ENCODE measurements at regions of chr5 and their contacts with region 1.

Region 1: GRCh38 chr5:140174465-140175366 is at the start of gene CYSTM1:
- DNase-seq: peak; percentile 95 to 98 (median 97)
- ATAC-seq: peak; percentile 94
- H3K4me3 ChIP-seq: peak within 1 kb of the TSS; percentile 97
- H3K4me3 Mint-ChIP-seq: peak within 1 kb of the TSS; percentile 84 to 95 (median 91)
- H3K27ac ChIP-seq: peak within 1 kb of the TSS; percentile 89
- H3K27ac Mint-ChIP-seq: peak within 1 kb of the TSS; percentile 78 to 98 (median 95)
- H3K4me1 ChIP-seq: peaks cover 8 to 14% of the 10 kb centered on the region in 2 donors
- H3K4me1 Mint-ChIP-seq: peaks cover 7 to 20% (median 14%) of the 10 kb centered on the region in 7 donors
- H3K27me3 ChIP-seq: no peaks in the 10 kb centered on the region
- H3K27me3 Mint-ChIP-seq: peaks cover 0 to 30% (median 0%) of the 10 kb centered on the region in 5 donors
- total RNA-seq, gene CYSTM1: 1.6 to 11.1 (median 3.5) TPM

Region 2: DNA sequence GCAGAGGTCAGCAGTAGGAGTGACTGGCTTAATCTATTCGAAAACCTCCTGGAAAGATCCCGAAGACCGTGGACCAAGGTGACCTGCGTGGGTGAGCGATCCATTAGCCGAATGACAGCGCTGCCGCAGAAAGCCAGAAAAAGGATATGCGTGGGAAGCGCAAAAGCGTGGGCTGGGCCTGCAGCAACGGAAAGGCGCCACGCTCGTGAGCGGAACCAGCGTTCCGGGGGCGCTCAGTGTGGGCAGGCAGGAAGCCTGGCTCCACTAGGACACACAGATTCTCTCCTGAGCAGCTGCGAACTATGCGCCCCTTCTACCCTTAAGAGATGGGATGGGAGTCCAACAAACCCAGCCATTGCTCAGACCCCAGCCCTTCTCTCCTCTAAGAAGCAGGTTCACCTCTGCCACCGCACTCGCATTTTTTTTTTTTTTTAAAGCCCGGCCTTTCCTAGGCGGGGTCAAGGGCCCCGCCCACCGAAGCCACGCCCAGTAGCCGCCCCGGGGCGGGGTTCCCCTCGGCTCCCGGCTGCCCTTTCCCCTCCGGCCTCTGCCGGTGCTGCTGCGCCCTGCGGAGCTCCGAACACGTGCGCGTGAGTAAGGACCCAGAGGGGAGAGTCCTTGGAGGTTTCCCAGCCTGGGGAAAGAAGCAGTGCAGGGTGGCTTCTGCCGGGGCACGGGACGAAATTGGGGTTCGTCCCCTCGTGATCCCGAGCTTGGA is 901.0 kb before region 1 on chr5:
- CTCF ChIA-PET with region 1: no interaction called
- POLR2A ChIA-PET with region 1: no interaction called
- intact Hi-C with region 1: loop called in 1 of 2 experiments (anchors 10 kb)
- DNase-seq: peak; percentile 71 to 95 (median 83)
- ATAC-seq: peak; percentile 99
- H3K4me3 ChIP-seq: peak overlapping the region; percentile 71
- H3K4me3 Mint-ChIP-seq: peak overlapping the region; percentile 77 to 92 (median 90)
- H3K27ac ChIP-seq: peak overlapping the region; percentile 69
- H3K27ac Mint-ChIP-seq: peak overlapping the region; percentile 54 to 92 (median 85)
- H3K4me1 ChIP-seq: peaks cover 26 to 27% of the 10 kb centered on the region in 2 donors
- H3K4me1 Mint-ChIP-seq: peaks cover 30 to 54% (median 47%) of the 10 kb centered on the region in 7 donors
- H3K27me3 ChIP-seq: no peaks in the 10 kb centered on the region
- H3K27me3 Mint-ChIP-seq: peaks cover 0 to 3% (median 0%) of the 10 kb centered on the region in 5 donors

Region 3: GRCh38 chr5:140113699-140114263 is 60.9 kb before region 1 on chr5 and contains the start of gene PURA:
- CTCF ChIA-PET with region 1: no interaction called
- POLR2A ChIA-PET with region 1: interaction called, 6 read pairs
- intact Hi-C with region 1: loop called (anchors 1 kb)
- DNase-seq: peak; percentile 94 to 98 (median 97)
- ATAC-seq: peak; percentile 93
- H3K4me3 ChIP-seq: peak within 1 kb of the TSS; percentile 77
- H3K4me3 Mint-ChIP-seq: peak within 1 kb of the TSS; percentile 86 to 97 (median 94)
- H3K27ac ChIP-seq: peak within 1 kb of the TSS; percentile 89
- H3K27ac Mint-ChIP-seq: peak within 1 kb of the TSS; percentile 88 to 99 (median 95)
- H3K4me1 ChIP-seq: peaks cover 46 to 57% of the 10 kb centered on the region in 2 donors
- H3K4me1 Mint-ChIP-seq: peaks cover 53 to 95% (median 77%) of the 10 kb centered on the region in 7 donors
- H3K27me3 ChIP-seq: peaks cover 0 to 7% of the 10 kb centered on the region in 2 donors
- H3K27me3 Mint-ChIP-seq: peaks cover 0 to 46% (median 4%) of the 10 kb centered on the region in 5 donors
- total RNA-seq, gene PURA: 11.6 to 33.5 (median 13.9) TPM

Region 4: DNA sequence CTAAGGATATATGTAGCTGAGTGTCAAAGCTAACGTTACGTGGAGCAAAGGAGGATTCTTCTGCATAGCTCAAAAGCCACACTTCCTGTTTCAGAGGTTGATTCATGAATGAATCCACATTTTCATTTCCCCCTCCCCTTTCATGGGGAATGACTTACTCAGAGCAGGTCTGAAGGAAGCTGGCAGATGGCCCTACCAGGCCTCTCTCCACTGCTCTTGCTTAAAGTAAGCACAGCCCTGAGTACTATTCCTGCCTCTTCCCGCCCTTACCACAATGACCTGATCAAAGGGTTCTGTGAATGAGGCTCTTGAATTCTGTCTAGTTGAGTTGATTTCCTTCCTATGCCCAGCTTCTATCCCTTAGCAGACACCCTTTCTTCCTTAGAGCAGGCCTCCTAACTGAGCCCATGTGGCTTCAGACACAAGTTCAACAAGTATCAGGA is 42.7 kb before region 1 on chr5:
- CTCF ChIA-PET with region 1: no interaction called
- POLR2A ChIA-PET with region 1: no interaction called
- intact Hi-C with region 1: no loop called
- DNase-seq: peak in 2 of 9 donors; percentile 18 to 36
- ATAC-seq: peak; percentile 85
- H3K4me3 ChIP-seq: no peak overlapping the region
- H3K4me3 Mint-ChIP-seq: peak overlapping the region in 6 of 10 donors; percentile 18 to 59 (median 45)
- H3K27ac ChIP-seq: no peak overlapping the region
- H3K27ac Mint-ChIP-seq: peak overlapping the region in 5 of 9 donors; percentile 0 to 62 (median 40)
- H3K4me1 ChIP-seq: peaks cover 8 to 14% of the 10 kb centered on the region in 2 donors
- H3K4me1 Mint-ChIP-seq: peaks cover 30 to 69% (median 53%) of the 10 kb centered on the region in 7 donors
- H3K27me3 ChIP-seq: no peaks in the 10 kb centered on the region
- H3K27me3 Mint-ChIP-seq: peaks cover 0 to 5% (median 0%) of the 10 kb centered on the region in 5 donors

Region 5: DNA sequence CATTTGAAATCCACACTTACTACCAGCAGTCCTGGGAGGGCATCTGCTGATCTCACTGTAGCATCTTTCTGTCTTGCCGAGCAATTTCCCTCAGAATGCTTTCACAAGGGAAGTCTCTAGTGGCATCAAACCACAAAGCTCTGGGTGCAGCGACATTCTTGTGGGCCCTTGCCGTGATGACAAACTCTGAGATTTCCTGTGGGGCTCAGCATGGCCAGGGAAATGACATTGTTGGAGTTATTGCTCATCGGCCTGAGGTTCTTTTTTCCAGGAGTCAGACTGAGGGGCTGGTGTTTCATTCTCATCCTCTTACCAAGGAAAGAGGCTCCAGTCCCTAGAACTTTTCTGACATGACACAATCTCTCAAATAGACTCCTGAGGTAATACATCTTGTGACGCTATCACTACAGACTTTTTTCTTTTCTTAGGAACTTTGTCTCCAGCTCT is 76.8 kb after region 1 on chr5:
- CTCF ChIA-PET with region 1: no interaction called
- POLR2A ChIA-PET with region 1: no interaction called
- intact Hi-C with region 1: no loop called
- DNase-seq: peak in 8 of 9 donors; percentile 24 to 70 (median 38)
- ATAC-seq: peak; percentile 89
- H3K4me3 ChIP-seq: no peak overlapping the region
- H3K4me3 Mint-ChIP-seq: peak overlapping the region in 8 of 10 donors; percentile 9 to 64 (median 36)
- H3K27ac ChIP-seq: peak overlapping the region; percentile 47
- H3K27ac Mint-ChIP-seq: peak overlapping the region; percentile 57 to 95 (median 78)
- H3K4me1 ChIP-seq: peaks cover 8 to 20% of the 10 kb centered on the region in 2 donors
- H3K4me1 Mint-ChIP-seq: peaks cover 27 to 54% (median 36%) of the 10 kb centered on the region in 7 donors
- H3K27me3 ChIP-seq: no peaks in the 10 kb centered on the region
- H3K27me3 Mint-ChIP-seq: no peaks in the 10 kb centered on the region

Region 6: DNA sequence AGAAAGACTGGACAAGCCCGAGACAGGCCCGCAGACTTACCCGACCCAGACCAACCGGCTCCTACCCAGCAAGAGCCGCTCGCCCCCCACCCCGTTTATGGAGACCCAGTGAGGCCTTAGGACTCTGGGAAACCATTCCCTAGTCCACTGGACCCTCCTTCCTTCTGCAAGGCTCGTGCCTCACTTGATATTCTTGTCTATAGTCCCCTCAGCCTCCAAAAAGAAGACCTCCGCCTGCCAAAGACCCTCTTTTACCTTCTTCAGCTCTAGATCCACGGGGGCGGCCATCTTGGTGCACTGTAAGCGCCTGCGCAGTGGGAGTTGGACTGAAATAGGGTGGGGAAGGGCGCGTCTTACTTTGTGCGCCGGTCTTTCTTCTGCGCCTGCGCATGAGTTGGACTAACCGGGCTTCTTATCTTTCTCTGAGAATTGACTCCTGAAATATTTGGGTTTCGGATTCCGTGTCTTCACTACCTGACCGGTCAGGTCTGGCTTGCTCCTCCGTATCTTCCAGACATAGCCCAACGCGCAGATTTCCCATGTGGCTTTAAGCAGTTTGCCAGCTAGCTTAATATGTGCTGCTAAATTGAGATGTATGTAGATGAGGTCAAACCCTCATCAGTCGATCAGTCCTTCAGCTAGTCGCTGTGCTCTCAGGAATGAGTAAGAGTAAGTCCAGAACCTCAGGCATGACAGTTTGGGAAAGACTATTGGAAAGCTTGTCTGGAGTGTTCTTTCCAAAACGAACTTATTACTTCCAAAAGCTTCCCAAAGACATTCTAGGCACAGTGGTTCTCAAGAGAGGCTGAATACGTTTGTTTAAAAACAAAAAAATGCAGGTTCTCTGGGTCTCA is 128.3 kb after region 1 on chr5 and contains the start of gene PFDN1:
- CTCF ChIA-PET with region 1: no interaction called
- POLR2A ChIA-PET with region 1: no interaction called
- intact Hi-C with region 1: loop called (anchors 1 kb)
- DNase-seq: peak; percentile 79 to 94 (median 89)
- ATAC-seq: peak; percentile 99
- H3K4me3 ChIP-seq: peak within 1 kb of the TSS; percentile 90
- H3K4me3 Mint-ChIP-seq: peak within 1 kb of the TSS; percentile 92 to 100 (median 98)
- H3K27ac ChIP-seq: peak within 1 kb of the TSS; percentile 91
- H3K27ac Mint-ChIP-seq: peak within 1 kb of the TSS; percentile 95 to 100 (median 98)
- H3K4me1 ChIP-seq: peaks cover 10 to 11% of the 10 kb centered on the region in 2 donors
- H3K4me1 Mint-ChIP-seq: peaks cover 4 to 39% (median 33%) of the 10 kb centered on the region in 7 donors
- H3K27me3 ChIP-seq: no peaks in the 10 kb centered on the region
- H3K27me3 Mint-ChIP-seq: peaks cover 0 to 9% (median 5%) of the 10 kb centered on the region in 5 donors
- total RNA-seq, gene PFDN1: 24.8 to 52.7 (median 28.2) TPM

Region 7: DNA sequence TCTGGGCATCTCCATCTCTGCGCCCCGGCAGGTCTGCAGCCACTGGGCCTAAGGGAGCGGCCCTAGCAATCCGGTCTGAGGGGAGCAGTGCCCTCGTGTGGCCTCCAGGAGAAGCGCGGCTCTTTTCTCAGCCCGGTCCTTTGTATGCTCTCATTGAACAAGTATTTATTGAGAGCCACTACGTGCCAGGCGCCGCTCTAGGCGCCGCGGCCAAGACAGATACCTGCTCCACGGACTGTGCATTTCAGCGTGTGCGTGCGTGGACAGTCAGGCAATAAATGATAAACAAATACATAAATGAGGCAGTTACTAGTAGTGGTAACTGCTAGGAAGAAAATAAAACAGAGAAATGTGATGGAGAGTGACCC is 183.0 kb after region 1 on chr5:
- CTCF ChIA-PET with region 1: no interaction called
- POLR2A ChIA-PET with region 1: no interaction called
- intact Hi-C with region 1: loop called in 1 of 2 experiments (anchors 5 kb)
- DNase-seq: peak; percentile 42 to 73 (median 61)
- ATAC-seq: peak; percentile 97
- H3K4me3 ChIP-seq: peak overlapping the region; percentile 36
- H3K4me3 Mint-ChIP-seq: peak overlapping the region in 9 of 10 donors; percentile 41 to 80 (median 59)
- H3K27ac ChIP-seq: no peak overlapping the region
- H3K27ac Mint-ChIP-seq: peak overlapping the region in 3 of 9 donors; percentile 20 to 47 (median 46)
- H3K4me1 ChIP-seq: peaks cover 8% of the 10 kb centered on the region in 2 donors
- H3K4me1 Mint-ChIP-seq: peaks cover 7 to 18% (median 8%) of the 10 kb centered on the region in 7 donors
- H3K27me3 ChIP-seq: no peaks in the 10 kb centered on the region
- H3K27me3 Mint-ChIP-seq: peaks cover 0 to 10% (median 0%) of the 10 kb centered on the region in 5 donors

Region 8: GRCh38 chr5:140639148-140639979 is 464.6 kb after region 1 on chr5 and contains the start of gene TMCO6:
- CTCF ChIA-PET with region 1: no interaction called
- POLR2A ChIA-PET with region 1: no interaction called
- intact Hi-C with region 1: loop called (anchors 1 to 2 kb)
- DNase-seq: peak; percentile 89 to 96 (median 94)
- ATAC-seq: peak; percentile 99
- H3K4me3 ChIP-seq: peak within 1 kb of the TSS; percentile 66
- H3K4me3 Mint-ChIP-seq: peak within 1 kb of the TSS; percentile 86 to 97 (median 93)
- H3K27ac ChIP-seq: peak within 1 kb of the TSS; percentile 79
- H3K27ac Mint-ChIP-seq: peak within 1 kb of the TSS; percentile 87 to 100 (median 93)
- H3K4me1 ChIP-seq: peaks cover 6% of the 10 kb centered on the region in 2 donors
- H3K4me1 Mint-ChIP-seq: peaks cover 21 to 54% (median 40%) of the 10 kb centered on the region in 7 donors
- H3K27me3 ChIP-seq: no peaks in the 10 kb centered on the region
- H3K27me3 Mint-ChIP-seq: no peaks in the 10 kb centered on the region
- total RNA-seq, gene TMCO6: 24.5 to 55.3 (median 36.4) TPM

Region 9: DNA sequence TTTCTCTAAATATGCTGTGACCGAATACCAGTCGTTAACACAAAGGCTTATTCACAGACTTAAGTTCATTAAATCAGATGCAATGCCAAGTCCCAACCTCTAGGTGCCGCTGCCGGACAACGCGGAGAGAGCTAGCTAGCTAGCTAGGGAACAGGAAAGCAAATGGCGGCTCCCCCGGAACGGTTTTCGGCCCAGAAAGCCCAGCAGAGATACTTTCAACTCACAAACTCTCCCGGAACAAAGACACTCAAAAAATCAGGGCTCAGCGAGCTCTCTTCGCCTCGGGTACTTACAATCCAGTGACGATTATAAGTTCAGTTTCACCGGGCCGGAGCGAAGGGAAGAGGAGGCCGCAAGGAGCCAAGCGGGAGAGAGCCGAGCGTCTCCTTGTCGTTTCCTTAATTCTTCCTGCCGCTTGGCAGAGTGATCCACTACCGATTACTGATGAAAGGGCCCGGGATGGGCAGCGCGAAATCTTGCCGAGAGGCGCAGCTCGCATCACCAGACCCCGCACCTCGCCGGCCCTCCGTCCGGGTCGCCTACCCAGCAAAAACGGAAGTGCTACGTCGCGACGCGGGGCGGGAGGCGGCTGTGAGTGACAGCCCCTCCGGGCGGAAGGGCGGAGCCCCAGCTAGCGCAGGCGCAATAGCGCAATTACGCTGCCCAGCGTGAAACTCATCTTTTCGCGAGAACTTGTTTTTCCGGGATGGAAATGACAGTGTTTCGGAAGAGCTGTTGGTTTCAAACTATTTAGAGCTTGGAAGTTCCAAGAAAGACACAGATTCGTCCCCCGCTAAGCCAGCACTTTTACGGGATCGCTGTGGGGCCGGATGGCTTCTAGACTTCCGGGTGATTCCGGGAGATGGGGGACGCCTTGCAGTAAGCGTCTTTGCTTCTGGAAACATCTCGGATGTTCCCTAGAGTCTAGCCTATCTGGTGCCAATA is 1145.8 kb after region 1 on chr5 and contains the start of gene TAF7:
- CTCF ChIA-PET with region 1: no interaction called
- POLR2A ChIA-PET with region 1: no interaction called
- intact Hi-C with region 1: loop called in 1 of 2 experiments (anchors 2 kb)
- DNase-seq: peak; percentile 88 to 94 (median 94)
- ATAC-seq: peak; percentile 94
- H3K4me3 ChIP-seq: peak within 1 kb of the TSS; percentile 95
- H3K4me3 Mint-ChIP-seq: peak within 1 kb of the TSS; percentile 90 to 100 (median 98)
- H3K27ac ChIP-seq: peak within 1 kb of the TSS; percentile 88
- H3K27ac Mint-ChIP-seq: peak within 1 kb of the TSS; percentile 97 to 100 (median 99)
- H3K4me1 ChIP-seq: peaks cover 7% of the 10 kb centered on the region in 2 donors
- H3K4me1 Mint-ChIP-seq: peaks cover 18 to 40% (median 27%) of the 10 kb centered on the region in 7 donors
- H3K27me3 ChIP-seq: no peaks in the 10 kb centered on the region
- H3K27me3 Mint-ChIP-seq: peaks cover 0 to 3% (median 0%) of the 10 kb centered on the region in 5 donors
- total RNA-seq, gene TAF7: 64.5 to 115 (median 84.9) TPM